Common myeloid progenitor, CD34-positive (primary cell): ENCODE measurements at regions of chr1 and their contacts with region 1.

Region 1: GRCh38 chr1:154558575-154559465 is at the start of gene UBE2Q1:
- DNase-seq: peak; percentile 99 to 100 (median 100)
- H3K4me3 ChIP-seq: peak within 1 kb of the TSS; percentile 74 to 92 (median 82)
- H3K27ac ChIP-seq: peak within 1 kb of the TSS; percentile 72 to 84
- H3K4me1 ChIP-seq: peaks cover 14 to 31% (median 27%) of the 10 kb centered on the region in 4 experiments
- H3K27me3 ChIP-seq: no peaks in the 10 kb centered on the region

Region 2: DNA sequence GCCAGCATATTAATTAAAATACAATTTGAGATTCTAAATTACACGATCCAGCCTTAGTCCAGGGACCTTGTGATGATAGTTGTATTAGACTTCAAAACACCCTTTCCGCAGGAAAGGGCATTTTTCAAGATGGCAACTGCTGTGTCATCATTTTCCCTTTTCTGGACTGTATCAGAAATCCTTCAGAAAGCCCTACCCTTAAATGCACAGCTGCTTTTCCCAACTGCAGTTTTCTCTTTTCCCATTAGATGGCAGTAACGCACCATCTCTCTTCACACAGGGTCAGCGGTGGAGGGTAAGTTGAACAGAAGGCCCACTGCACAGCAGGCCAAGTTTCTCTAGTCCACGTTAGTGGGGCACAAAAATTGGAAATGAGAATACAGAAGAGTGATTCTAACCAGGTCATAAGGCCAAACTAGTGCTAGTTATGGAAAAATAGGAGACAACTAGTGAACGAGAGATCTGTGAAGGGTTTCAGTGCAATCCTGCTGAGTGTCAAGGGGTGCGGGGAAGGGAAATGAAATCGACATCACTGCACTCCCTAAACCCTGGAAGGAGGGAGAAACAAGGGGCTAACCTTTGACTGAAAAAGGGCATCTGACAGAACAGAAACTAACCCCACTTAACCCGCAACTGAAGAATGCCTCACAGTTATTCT is 78.9 kb before region 1 on chr1:
- CTCF ChIA-PET with region 1: interaction called, 341 read pairs
- POLR2A ChIA-PET with region 1: no interaction called
- DNase-seq: peak; percentile 72 to 81 (median 80)
- H3K4me3 ChIP-seq: no peak overlapping the region
- H3K27ac ChIP-seq: no peak overlapping the region
- H3K4me1 ChIP-seq: peaks cover 2 to 44% (median 21%) of the 10 kb centered on the region in 4 experiments
- H3K27me3 ChIP-seq: no peaks in the 10 kb centered on the region

Region 3: DNA sequence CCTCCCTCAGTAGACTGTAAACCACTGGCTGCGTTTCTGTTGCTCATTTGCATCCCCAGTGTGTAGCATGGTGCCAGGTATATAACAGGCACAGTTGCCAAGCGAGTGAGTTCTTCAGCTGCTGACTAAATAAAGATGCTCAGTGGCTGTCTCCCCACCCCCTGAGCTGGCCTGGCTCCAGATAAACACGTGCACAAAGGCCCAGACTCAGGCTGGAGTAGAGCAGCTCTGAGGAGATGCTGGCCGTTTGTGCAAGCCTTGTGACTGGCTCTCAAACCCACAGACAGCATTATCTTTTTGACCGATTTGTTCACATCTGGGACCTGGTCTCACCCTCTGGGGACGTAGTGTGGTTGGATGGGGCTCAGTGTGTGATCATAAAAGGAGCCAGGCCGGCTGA is 15.9 kb after region 1 on chr1:
- CTCF ChIA-PET with region 1: interaction called, 10 read pairs
- POLR2A ChIA-PET with region 1: interaction called, 3 read pairs
- DNase-seq: peak in 1 of 3 donors; percentile 12
- H3K4me3 ChIP-seq: no peak overlapping the region
- H3K27ac ChIP-seq: no peak overlapping the region
- H3K4me1 ChIP-seq: no peaks in the 10 kb centered on the region
- H3K27me3 ChIP-seq: peaks cover 0 to 3% (median 0%) of the 10 kb centered on the region in 5 experiments

Region 4: GRCh38 chr1:154760469-154760933 is 201.7 kb after region 1 on chr1:
- CTCF ChIA-PET with region 1: interaction called, 14 read pairs
- POLR2A ChIA-PET with region 1: no interaction called
- DNase-seq: peak; percentile 55 to 71 (median 63)
- H3K4me3 ChIP-seq: peak overlapping the region; percentile 19 to 66 (median 43)
- H3K27ac ChIP-seq: no peak overlapping the region
- H3K4me1 ChIP-seq: peaks cover 2 to 19% (median 14%) of the 10 kb centered on the region in 4 experiments
- H3K27me3 ChIP-seq: peaks cover 0 to 23% (median 3%) of the 10 kb centered on the region in 5 experiments

Region 5: DNA sequence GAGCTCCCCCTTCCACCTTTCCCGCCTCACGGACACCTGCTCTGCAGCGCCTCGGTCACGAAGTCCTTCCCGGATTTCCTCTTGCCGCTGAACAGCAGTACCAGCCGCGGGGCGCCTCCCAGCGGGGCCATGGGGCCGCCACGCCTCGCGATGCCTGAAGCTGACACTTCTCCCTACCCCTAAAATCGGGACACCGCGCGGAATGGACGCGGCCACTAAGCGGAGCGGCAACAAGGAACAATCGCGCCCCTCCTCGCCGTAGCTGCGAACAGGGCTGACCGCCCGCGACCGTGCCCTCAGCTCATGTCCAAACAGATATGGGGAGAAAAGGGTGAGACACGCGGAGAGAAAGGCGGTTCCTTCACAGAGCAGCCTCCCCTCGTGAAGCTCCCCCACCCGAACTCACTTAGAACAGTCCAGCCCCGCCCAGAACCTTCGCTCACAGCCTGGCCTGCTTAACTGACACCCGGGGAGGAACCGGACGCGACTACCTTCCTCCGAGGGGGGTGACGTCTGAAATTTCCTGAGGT is 377.8 kb after region 1 on chr1 and contains the start of gene PMVK:
- CTCF ChIA-PET with region 1: interaction called, 10 read pairs
- POLR2A ChIA-PET with region 1: no interaction called
- DNase-seq: peak; percentile 97 to 99 (median 99)
- H3K4me3 ChIP-seq: peak within 1 kb of the TSS; percentile 44 to 86 (median 80)
- H3K27ac ChIP-seq: peak within 1 kb of the TSS; percentile 99
- H3K4me1 ChIP-seq: peaks cover 12 to 61% (median 54%) of the 10 kb centered on the region in 4 experiments
- H3K27me3 ChIP-seq: no peaks in the 10 kb centered on the region